Right ventricle myocardium inferior (tissue), 1 donor: ENCODE measurements at regions of chr3 and their contacts with region 1.

Region 1: DNA sequence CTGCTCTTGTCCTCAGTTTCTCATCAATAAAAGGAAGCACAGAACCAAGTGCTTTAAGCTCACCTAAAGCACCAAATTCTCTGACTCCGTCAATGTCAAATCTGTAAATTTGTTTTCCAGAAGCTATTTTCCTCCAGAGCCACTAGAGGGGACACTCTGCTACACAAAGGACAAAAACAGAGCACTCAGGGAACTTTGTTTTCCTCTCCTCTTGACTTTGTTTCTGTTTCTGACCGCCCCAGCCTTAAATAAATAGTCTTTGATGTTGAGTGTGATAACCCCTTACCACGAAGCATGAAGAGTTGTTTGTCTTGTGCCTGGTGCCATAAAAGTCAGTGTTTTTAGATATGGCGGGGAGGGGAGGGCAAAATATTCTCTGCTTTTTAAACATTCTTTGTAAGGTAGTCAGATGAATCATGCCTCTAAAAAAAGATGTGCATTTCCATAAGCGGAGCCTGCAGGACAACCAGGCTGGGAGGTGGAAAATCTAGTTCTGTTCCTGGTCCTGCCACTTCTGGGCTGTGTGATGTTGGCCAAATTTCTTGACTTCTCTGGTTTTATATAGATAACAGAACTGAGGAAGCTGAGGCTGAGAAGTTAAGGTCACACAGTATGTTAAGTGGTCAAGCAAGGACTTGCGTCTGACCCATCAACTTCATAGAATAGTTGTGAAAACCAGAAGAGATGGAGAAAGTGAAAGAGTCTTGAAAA is 7.3 kb upstream of the ZBTB38 start:
- DNase-seq: no peak
- ATAC-seq: peak; percentile 80

Region 2: GRCh38 chr3:141311496-141312353 is 49.3 kb before region 1 on chr3:
- intact Hi-C with region 1: loop called (anchors 2 kb)
- DNase-seq: peak; percentile 99
- ATAC-seq: peak; percentile 98